OCI-LY7 (cell line): ENCODE measurements at regions of chr7 and their contacts with region 1.

Region 1: GRCh38 chr7:101363734-101364374 is 1.2 kb downstream of the COL26A1 start:
- DNase-seq: peak; percentile 61
- H3K4me3 ChIP-seq: no peak overlapping the region
- H3K27ac ChIP-seq: no peak overlapping the region
- H3K4me1 ChIP-seq: no peaks in the 10 kb centered on the region
- CTCF ChIP-seq: peak; percentile 83

Region 2: GRCh38 chr7:101308245-101309085 is 55.4 kb before region 1 on chr7:
- CTCF ChIA-PET with region 1: no interaction called
- POLR2A ChIA-PET with region 1: no interaction called
- intact Hi-C with region 1: no loop called
- DNase-seq: no peak
- H3K4me3 ChIP-seq: no peak overlapping the region
- H3K27ac ChIP-seq: no peak overlapping the region
- H3K4me1 ChIP-seq: no peaks in the 10 kb centered on the region
- CTCF ChIP-seq: no peak

Region 3: GRCh38 chr7:101381549-101382111 is 17.8 kb after region 1 on chr7:
- CTCF ChIA-PET with region 1: no interaction called
- POLR2A ChIA-PET with region 1: no interaction called
- intact Hi-C with region 1: no loop called
- DNase-seq: no peak
- H3K4me3 ChIP-seq: no peak overlapping the region
- H3K27ac ChIP-seq: no peak overlapping the region
- H3K4me1 ChIP-seq: no peaks in the 10 kb centered on the region
- CTCF ChIP-seq: no peak

Region 4: DNA sequence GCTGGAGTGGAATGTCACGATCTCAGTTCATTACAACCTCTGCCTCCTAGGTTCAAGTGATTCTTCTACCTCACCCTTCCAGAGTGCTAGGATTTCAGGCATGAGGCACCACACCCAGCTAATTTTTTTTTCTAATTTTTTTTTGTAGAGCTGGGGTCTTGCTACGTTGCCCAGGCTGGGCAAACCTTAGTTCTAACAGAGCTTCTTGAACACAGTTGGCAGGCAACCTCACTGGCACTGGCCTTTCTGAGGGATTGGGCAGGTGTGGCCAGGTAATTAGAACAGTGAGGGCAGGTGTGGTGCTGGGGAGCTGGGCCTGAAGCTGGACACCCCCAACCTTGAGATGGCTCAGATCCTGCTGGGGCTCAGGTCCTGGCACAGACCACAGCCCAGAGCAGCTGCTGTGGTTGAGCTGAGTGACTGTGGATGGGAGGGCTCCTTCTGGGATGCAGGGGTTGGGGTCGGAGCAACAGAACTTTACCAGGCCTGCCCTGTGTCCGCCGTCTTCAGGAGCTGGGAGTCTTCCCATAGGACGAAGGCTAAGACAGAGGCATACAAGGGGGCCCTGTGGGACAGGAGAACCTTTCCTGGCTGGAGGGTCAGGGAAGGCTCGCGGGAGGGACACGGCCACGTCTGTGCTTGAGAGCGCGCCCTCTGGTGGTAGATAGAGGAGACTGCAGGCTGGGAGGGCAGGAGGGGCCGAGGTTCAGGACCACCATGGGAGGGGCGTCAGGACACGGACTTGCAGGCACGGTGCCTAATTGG is 47.1 kb after region 1 on chr7:
- CTCF ChIA-PET with region 1: no interaction called
- POLR2A ChIA-PET with region 1: no interaction called
- intact Hi-C with region 1: loop called (anchors 2 kb)
- DNase-seq: peak; percentile 26
- H3K4me3 ChIP-seq: no peak overlapping the region
- H3K27ac ChIP-seq: no peak overlapping the region
- H3K4me1 ChIP-seq: no peaks in the 10 kb centered on the region
- CTCF ChIP-seq: peak; percentile 81

Region 5: DNA sequence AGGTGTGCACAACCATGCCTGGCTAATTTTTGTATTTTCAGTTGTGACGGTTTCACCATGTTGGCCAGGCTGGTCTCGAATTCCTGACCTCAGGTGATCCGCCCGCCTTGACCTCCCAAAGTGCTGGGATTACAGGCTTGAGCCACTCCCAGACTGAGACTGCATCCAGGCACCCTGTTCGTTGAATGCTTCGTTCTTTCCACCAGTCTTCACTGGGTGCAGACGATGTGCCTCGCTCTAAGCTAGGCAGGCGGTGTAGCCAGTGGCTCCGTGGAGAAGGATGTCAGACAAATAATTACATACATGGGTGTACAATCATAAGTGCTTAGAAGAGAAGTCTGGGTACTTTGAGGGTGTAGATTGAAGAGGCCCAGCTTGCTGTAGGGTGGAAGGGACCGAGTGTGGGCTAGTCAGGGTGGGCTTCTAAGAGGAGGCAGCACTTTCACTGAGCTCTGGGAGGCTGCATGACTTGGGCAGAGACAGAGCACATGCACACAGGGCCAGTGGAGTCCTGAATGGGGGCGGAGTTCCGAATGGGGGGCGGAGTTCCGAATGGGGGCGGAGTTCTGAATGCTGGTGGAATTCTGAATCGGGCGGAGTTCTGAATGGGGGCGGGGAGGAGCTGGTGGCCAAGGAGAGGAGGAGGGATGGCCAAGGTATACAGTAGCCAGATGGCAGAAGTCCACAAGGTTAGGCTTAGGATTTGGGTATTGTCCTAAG is 73.2 kb after region 1 on chr7:
- CTCF ChIA-PET with region 1: no interaction called
- POLR2A ChIA-PET with region 1: no interaction called
- intact Hi-C with region 1: loop called (anchors 1 kb)
- DNase-seq: no peak
- H3K4me3 ChIP-seq: no peak overlapping the region
- H3K27ac ChIP-seq: no peak overlapping the region
- H3K4me1 ChIP-seq: no peaks in the 10 kb centered on the region
- CTCF ChIP-seq: no peak

Region 6: GRCh38 chr7:101507791-101508252 is 144.0 kb after region 1 on chr7:
- CTCF ChIA-PET with region 1: no interaction called
- POLR2A ChIA-PET with region 1: no interaction called
- intact Hi-C with region 1: loop called (anchors 1 kb)
- DNase-seq: peak; percentile 87
- H3K4me3 ChIP-seq: peak overlapping the region; percentile 39
- H3K27ac ChIP-seq: no peak overlapping the region
- H3K4me1 ChIP-seq: peaks cover 27% of the 10 kb centered on the region
- CTCF ChIP-seq: peak; percentile 100